ENCODE measurements at regions of chr1 and their contacts with region 1.

Region 1: DNA sequence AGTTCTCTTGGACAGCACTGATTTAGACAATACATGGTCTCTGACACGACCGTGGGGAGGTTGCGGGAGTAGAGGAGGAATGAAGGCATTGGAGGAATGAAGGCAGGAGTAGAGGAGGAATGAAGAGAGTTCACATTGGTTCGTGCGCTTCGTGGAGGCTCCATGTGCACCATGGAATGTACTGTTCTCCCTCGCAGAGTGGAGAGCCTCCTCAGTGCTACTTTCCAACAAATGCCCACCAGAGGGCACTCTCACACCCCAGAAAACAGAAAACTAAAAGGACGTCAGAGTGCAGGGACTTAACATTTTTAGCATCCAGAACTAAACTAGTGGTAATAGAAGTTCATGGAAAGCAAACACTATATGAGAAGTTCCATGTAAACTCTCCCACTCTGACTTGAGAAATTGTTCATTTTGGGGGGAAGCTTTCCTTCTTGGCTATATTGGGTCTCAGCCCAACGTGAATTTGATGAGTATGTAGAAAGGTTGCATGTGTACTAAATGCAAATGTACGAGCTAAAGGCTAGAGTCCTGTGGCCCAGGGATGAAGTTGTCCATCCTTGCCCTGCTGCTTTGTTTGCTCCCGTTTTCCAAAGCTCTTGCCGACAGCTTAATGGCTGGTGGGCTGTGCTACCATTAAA is 211.6 kb downstream of the LMX1A start:
- DNase-seq: peak; percentile 61 to 76
- H3K4me3 ChIP-seq: no peak overlapping the region
- H3K4me3 Mint-ChIP-seq: no peak overlapping the region
- H3K27ac Mint-ChIP-seq: no peak overlapping the region
- H3K4me1 ChIP-seq: peaks cover 2% of the 10 kb centered on the region; the same call in 1 of the 2 replicates
- H3K4me1 Mint-ChIP-seq: peaks cover 20% of the 10 kb centered on the region
- H3K27me3 ChIP-seq: no peaks in the 10 kb centered on the region
- H3K27me3 Mint-ChIP-seq: peaks cover 3% of the 10 kb centered on the region
- CTCF ChIP-seq: peak; percentile 76 to 80

Region 2: GRCh38 chr1:165114022-165114888 is 30.6 kb before region 1 on chr1:
- CTCF ChIA-PET with region 1: interaction called, 3 read pairs
- POLR2A ChIA-PET with region 1: no interaction called
- intact Hi-C with region 1: loop called (anchors 1 kb)
- DNase-seq: peak; percentile 54 to 72
- H3K4me3 ChIP-seq: no peak overlapping the region
- H3K4me3 Mint-ChIP-seq: no peak overlapping the region
- H3K27ac Mint-ChIP-seq: no peak overlapping the region
- H3K4me1 ChIP-seq: peaks cover 2% of the 10 kb centered on the region
- H3K4me1 Mint-ChIP-seq: no peaks in the 10 kb centered on the region
- H3K27me3 ChIP-seq: no peaks in the 10 kb centered on the region
- H3K27me3 Mint-ChIP-seq: peaks cover 5% of the 10 kb centered on the region
- CTCF ChIP-seq: peak; percentile 64 to 91

Region 3: GRCh38 chr1:165179306-165179705 is 34.4 kb after region 1 on chr1:
- CTCF ChIA-PET with region 1: no interaction called
- POLR2A ChIA-PET with region 1: no interaction called
- intact Hi-C with region 1: no loop called
- DNase-seq: no peak
- H3K4me3 ChIP-seq: no peak overlapping the region
- H3K4me3 Mint-ChIP-seq: no peak overlapping the region
- H3K27ac Mint-ChIP-seq: no peak overlapping the region
- H3K4me1 ChIP-seq: no peaks in the 10 kb centered on the region
- H3K4me1 Mint-ChIP-seq: no peaks in the 10 kb centered on the region
- H3K27me3 ChIP-seq: no peaks in the 10 kb centered on the region
- H3K27me3 Mint-ChIP-seq: peaks cover 4% of the 10 kb centered on the region
- CTCF ChIP-seq: no peak

Region 4: DNA sequence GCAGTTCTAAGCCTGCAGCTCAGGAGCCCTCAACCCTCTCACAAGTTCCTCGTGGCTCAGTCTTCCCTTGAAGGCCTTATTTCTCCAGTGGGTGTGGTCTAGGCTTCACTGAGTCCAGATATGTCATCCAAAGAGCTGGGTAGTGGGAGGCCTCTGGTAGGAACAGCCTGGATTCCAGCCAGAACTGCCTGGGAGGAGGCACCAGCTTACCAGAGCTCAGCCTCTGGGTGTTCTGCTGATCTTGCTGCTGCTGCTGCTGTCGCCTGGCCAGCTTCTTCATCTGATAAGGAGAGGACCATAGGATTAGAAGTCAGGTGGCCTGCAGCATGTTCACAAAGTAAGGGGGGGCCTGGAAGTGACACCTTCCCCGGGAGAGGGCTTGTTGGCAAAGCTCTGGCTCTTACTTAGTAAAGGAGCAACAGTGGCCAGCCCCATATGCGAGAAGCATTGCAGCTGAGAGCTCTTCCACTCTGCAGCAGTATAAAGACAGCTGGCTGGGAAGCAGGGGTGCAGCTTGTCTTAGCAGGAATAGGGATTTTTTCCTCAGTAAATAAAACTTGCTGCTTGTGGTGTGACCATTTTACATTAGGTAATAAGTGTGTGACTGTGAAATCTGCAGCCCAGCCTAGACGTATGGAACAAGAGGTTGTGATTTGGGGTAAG is 63.1 kb after region 1 on chr1:
- CTCF ChIA-PET with region 1: no interaction called
- POLR2A ChIA-PET with region 1: no interaction called
- intact Hi-C with region 1: no loop called
- DNase-seq: no peak
- H3K4me3 ChIP-seq: no peak overlapping the region
- H3K4me3 Mint-ChIP-seq: no peak overlapping the region
- H3K27ac Mint-ChIP-seq: no peak overlapping the region
- H3K4me1 ChIP-seq: no peaks in the 10 kb centered on the region
- H3K4me1 Mint-ChIP-seq: no peaks in the 10 kb centered on the region
- H3K27me3 ChIP-seq: no peaks in the 10 kb centered on the region; the same call in 1 of the 2 replicates
- H3K27me3 Mint-ChIP-seq: no peaks in the 10 kb centered on the region
- CTCF ChIP-seq: no peak

Region 5: GRCh38 chr1:165257969-165258459 is 113.1 kb after region 1 on chr1:
- CTCF ChIA-PET with region 1: no interaction called
- POLR2A ChIA-PET with region 1: no interaction called
- intact Hi-C with region 1: loop called (anchors 5 kb)
- DNase-seq: peak; percentile 63 to 70
- H3K4me3 ChIP-seq: no peak overlapping the region
- H3K4me3 Mint-ChIP-seq: no peak overlapping the region
- H3K27ac Mint-ChIP-seq: no peak overlapping the region
- H3K4me1 ChIP-seq: no peaks in the 10 kb centered on the region
- H3K4me1 Mint-ChIP-seq: peaks cover 7% of the 10 kb centered on the region
- H3K27me3 ChIP-seq: no peaks in the 10 kb centered on the region
- H3K27me3 Mint-ChIP-seq: peaks cover 8% of the 10 kb centered on the region
- CTCF ChIP-seq: peak; percentile 54 to 69

Region 6: DNA sequence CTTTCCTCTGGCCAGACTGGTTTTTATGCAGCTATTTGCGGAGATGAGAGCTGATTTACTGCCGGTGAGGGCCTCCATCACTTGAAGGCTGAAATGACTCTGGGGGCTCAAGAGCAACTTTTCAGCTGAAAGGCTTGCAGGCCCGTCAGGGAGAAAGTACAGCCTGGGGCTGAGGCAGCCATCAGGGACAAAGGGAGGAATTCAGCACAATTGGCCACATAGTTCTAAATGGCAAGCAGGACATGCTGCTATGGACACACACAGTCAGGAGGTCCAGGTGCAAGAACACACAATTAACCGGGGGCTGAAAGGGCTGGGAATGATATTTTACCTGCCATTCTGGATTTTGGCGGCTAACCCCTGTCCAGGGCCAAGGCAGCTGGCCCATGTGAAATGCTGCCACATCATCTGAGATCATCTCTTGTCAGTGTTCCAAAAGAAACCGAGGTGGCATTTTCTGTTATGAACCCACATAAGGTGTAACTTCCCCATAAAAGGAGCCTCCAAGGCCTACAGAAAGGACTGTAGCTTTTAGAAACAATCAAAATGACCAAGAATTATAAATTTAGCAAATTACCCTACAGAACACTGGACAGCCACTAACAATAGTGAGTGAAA is 153.4 kb after region 1 on chr1:
- CTCF ChIA-PET with region 1: no interaction called
- POLR2A ChIA-PET with region 1: no interaction called
- intact Hi-C with region 1: loop called (anchors 1 kb)
- DNase-seq: no peak
- H3K4me3 ChIP-seq: no peak overlapping the region
- H3K4me3 Mint-ChIP-seq: no peak overlapping the region
- H3K27ac Mint-ChIP-seq: no peak overlapping the region
- H3K4me1 ChIP-seq: no peaks in the 10 kb centered on the region
- H3K4me1 Mint-ChIP-seq: no peaks in the 10 kb centered on the region
- H3K27me3 ChIP-seq: no peaks in the 10 kb centered on the region
- H3K27me3 Mint-ChIP-seq: peaks cover 6% of the 10 kb centered on the region
- CTCF ChIP-seq: no peak